ENCODE measurements at regions of chr3 and their contacts with region 1.

Region 1: GRCh38 chr3:69425261-69425660 is 39.4 kb upstream of the FRMD4B start:
- DNase-seq: no peak
- H3K4me3 ChIP-seq: no peak overlapping the region
- H3K27me3 ChIP-seq: no peaks in the 10 kb centered on the region; the same call in 1 of the 2 replicates
- CTCF ChIP-seq: peak; percentile 59

Region 2: DNA sequence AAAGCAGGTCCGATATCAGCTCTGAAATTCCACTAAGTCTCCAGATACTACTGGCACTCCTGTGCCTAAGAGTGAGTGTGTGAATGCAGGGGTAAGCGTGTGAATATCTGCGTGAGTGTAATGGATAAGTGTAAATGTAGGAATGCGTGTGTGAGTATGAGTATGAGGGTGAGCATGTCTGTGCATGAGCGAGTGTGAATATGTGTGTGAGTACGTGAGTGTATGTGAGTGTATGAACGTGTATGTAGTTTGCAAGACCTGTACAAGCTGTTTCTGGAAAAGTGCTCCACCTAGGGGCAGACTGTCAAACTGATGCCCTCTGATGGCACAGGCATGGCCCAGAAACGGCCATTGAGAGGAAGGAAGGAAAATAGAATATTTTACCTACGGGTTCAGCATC is 15.0 kb before region 1 on chr3:
- CTCF ChIA-PET with region 1: interaction called, 37 read pairs
- POLR2A ChIA-PET with region 1: no interaction called
- DNase-seq: no peak
- H3K4me3 ChIP-seq: no peak overlapping the region
- H3K27me3 ChIP-seq: no peaks in the 10 kb centered on the region; the same call in 1 of the 2 replicates
- CTCF ChIP-seq: peak; percentile 89

Region 3: DNA sequence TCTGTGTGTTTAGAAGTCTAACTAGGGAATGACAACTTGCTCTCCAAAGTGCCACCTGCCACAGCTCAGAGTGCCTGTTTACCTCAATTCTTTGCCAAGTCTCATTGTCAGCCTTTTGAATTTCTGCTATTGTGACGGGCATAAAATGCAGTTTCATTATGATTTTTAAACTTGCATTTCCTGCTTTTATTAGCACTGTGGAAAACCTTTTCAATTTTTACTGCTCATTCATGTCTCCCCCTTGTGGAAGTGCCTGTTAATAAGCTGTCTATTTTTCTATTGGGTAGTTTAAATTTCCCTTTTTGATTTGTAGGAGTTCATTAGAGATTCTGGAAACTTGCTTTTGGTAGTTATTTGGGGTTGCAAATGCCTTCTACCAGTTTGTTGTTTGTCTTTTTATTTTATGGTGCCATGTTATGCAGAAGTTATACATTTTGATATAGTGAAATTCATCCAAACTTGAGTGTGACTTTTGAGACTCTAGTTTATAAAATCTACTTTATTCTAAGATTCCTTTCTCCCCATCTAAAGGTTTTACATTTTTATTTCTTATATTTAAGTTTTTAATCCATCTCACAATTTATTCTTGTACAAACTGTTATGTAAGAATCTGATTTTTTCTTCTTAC is 14.5 kb after region 1 on chr3:
- CTCF ChIA-PET with region 1: interaction called, 31 read pairs
- POLR2A ChIA-PET with region 1: no interaction called
- DNase-seq: no peak
- H3K4me3 ChIP-seq: no peak overlapping the region
- H3K27me3 ChIP-seq: no peaks in the 10 kb centered on the region
- CTCF ChIP-seq: peak; percentile 79